Activated CD4-positive, alpha-beta memory T cell treated with anti-CD3 and anti-CD28 coated beads, Interleukin-2, amount 10 ng/mL, durations not matched to agents 7 days and 5 days (primary cell): ENCODE measurements at regions of chr10 and their contacts with region 1.

Region 1: GRCh38 chr10:96089670-96090462 is 40.2 kb upstream of the ZNF518A start:
- DNase-seq: peak; percentile 95
- H3K4me3 Mint-ChIP-seq: peak overlapping the region; percentile 88
- H3K27ac Mint-ChIP-seq: peak overlapping the region; percentile 97
- H3K4me1 Mint-ChIP-seq: peaks cover 14% of the 10 kb centered on the region
- H3K27me3 Mint-ChIP-seq: peaks cover 19% of the 10 kb centered on the region

Region 2: GRCh38 chr10:95850791-95851190 is 239.1 kb before region 1 on chr10:
- CTCF ChIA-PET with region 1: no interaction called
- POLR2A ChIA-PET with region 1: no interaction called
- DNase-seq: no peak
- H3K4me3 Mint-ChIP-seq: no peak overlapping the region
- H3K27ac Mint-ChIP-seq: no peak overlapping the region
- H3K4me1 Mint-ChIP-seq: peaks cover under 1% of the 10 kb centered on the region
- H3K27me3 Mint-ChIP-seq: peaks cover 9% of the 10 kb centered on the region

Region 3: DNA sequence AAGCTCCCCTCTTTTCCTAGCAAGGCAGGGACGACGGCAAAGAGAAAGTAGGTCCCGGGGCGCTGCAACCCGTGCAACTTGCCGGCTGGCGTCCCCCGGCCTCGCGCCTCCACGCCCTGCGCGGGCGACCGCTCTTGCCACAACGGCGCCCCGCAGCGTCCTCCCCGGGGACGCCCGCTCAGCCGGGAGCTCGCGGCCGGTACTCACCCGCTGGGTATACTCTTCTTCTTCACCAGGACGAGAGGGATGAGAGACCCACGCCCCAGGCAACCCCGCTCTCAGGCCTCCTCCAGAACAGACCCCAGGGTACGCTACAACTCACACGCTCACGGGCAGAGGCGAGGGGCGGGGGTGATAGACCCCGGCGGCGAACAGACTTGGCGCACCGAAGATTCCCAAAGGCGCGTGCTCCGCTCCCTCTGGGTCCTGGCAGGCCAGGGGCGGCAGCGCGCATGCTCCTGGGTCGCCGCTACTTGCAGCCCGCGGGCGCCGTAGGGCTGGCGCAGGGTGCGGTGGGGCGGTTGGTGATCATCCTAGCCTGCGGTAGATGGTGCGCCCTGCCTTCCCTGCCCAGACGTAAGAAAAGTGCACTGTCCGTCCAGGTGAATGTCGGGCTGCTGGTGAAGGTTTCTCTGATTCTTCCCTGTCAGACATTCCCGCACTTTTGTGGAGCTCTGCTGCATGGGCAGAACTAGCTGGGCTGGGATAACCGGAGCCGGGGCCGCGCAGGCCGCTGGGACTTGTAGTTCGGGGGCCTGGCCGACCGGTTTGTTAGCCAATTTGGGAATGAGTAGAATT is 182.2 kb before region 1 on chr10 and contains the start of gene CC2D2B:
- CTCF ChIA-PET with region 1: no interaction called
- POLR2A ChIA-PET with region 1: interaction called, 12 read pairs
- DNase-seq: peak; percentile 70
- H3K4me3 Mint-ChIP-seq: peak within 1 kb of the TSS; percentile 87
- H3K27ac Mint-ChIP-seq: peak within 1 kb of the TSS; percentile 76
- H3K4me1 Mint-ChIP-seq: peaks cover 15% of the 10 kb centered on the region
- H3K27me3 Mint-ChIP-seq: peaks cover 14% of the 10 kb centered on the region
- total RNA-seq, gene CC2D2B: 0.35 to 0.40 TPM

Region 4: GRCh38 chr10:95976362-95977229 is 113.3 kb before region 1 on chr10:
- CTCF ChIA-PET with region 1: no interaction called
- POLR2A ChIA-PET with region 1: no interaction called
- DNase-seq: no peak
- H3K4me3 Mint-ChIP-seq: no peak overlapping the region
- H3K27ac Mint-ChIP-seq: no peak overlapping the region
- H3K4me1 Mint-ChIP-seq: no peaks in the 10 kb centered on the region
- H3K27me3 Mint-ChIP-seq: no peaks in the 10 kb centered on the region

Region 5: DNA sequence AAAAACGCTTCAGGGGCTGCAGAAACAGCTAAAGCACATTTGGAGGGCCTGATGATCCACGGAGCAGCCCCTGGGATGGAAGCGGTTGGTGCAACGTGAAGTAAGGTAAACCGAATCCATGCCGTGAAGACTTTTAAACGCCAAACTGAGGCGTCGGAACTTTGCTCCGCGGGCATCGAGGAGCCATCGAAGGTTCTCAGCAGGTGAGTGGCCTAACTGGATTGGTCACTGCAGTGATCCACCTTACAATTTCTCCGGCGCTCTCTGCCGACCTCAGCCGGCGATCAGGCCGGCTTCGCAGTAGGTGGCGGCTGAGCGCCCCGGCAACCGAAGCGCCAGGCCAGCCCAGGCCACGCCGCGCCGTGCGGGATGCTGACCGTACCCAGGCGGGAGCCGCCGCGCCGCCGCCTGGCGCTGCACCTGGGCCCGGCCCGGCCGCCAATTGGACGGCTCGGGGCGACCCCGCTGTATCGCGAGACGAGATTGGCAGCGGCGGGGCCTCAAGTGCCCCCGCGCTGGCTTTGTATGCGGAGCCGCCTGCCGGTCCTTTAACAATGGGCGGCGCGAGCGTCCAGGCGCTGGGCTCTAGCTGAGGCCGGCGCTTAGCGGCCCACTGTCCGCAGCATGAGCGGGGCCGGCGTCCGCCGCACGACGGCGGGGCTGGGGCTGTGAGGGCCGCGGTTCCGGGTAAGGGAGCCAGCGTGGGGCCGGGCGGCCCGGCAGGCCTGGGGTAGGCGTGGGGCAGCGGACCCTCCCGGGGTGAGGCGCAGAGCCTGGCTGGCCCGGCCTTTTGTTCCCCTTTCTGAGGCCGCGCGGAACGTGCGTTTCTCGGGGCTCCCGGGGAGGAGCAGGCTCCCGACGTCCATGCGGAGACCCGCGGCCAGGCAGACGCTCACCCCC is 46.6 kb before region 1 on chr10 and contains the start of gene CCNJ:
- CTCF ChIA-PET with region 1: interaction called, 4 read pairs
- POLR2A ChIA-PET with region 1: interaction called, 27 read pairs
- DNase-seq: peak; percentile 85
- H3K4me3 Mint-ChIP-seq: peak within 1 kb of the TSS; percentile 88
- H3K27ac Mint-ChIP-seq: peak within 1 kb of the TSS; percentile 63
- H3K4me1 Mint-ChIP-seq: peaks cover 33% of the 10 kb centered on the region
- H3K27me3 Mint-ChIP-seq: peaks cover 4% of the 10 kb centered on the region
- total RNA-seq, gene CCNJ: 4.7 to 5.6 TPM

Region 6: DNA sequence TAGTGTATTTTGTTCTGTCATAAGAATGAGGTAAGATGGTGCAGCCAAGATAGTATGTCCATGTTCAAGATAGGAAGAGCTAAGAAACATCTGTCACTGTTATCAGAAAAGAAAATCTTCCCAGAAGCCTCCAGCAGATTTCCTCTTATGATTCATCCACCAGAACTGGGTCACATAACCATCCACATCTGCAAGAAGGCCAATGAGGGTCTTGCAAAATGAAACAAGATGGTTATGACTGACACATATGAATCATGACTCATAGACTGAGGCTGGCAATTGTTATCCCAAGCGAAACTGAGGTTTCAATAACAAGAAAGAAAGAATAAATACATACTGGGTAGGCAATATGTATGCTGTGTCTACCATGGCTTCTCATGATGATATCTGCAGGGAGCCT is 16.1 kb before region 1 on chr10:
- CTCF ChIA-PET with region 1: interaction called, 4 read pairs
- POLR2A ChIA-PET with region 1: interaction called, 22 read pairs
- DNase-seq: no peak
- H3K4me3 Mint-ChIP-seq: no peak overlapping the region
- H3K27ac Mint-ChIP-seq: peak overlapping the region; percentile 64
- H3K4me1 Mint-ChIP-seq: peaks cover 33% of the 10 kb centered on the region
- H3K27me3 Mint-ChIP-seq: no peaks in the 10 kb centered on the region

Region 7: DNA sequence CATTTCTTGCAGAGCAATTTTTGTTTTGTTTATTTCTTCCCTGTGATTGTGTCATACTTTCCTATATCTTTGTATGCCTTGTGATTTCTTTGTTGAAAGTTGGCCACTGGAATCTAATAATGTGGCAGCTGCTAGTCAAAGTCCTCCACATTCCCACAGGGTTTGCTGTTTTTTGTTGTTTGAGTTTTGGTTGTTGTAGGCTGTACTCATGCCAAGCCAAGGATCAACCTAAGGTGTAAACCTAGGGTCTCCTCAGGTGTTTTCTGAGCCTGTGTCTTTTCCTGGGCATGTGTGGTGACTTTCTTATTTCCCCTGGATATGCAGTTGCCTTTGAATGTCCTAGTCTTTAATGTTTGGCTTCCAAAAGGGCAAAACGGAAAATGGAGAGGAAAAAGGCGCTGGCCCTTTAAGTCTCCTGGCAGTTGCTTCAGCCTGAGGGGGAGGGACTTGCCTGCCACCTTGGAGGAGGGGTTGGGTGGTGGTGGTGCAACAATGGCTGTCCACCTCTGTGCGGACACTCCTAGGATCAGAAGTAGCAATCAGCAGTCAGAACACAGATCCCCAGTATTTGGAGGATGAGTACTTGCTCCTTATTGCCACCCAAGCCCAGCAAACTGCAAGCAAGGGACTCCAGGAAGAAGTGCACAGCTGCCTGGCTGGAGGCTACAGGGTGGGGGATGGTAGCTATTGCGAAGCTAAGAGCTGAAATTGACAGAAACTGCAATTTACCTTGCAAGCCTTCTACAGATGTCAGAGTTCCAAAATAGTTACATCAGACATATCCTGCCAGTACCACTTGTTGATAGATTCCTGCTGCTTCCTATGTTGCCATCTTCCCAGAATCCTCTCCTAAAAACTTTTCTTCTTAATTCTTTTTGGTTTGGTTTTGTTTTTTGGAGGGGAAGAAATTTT is 34.6 kb after region 1 on chr10:
- CTCF ChIA-PET with region 1: interaction called, 31 read pairs
- POLR2A ChIA-PET with region 1: interaction called, 229 read pairs
- DNase-seq: no peak
- H3K4me3 Mint-ChIP-seq: no peak overlapping the region
- H3K27ac Mint-ChIP-seq: no peak overlapping the region
- H3K4me1 Mint-ChIP-seq: peaks cover 10% of the 10 kb centered on the region
- H3K27me3 Mint-ChIP-seq: peaks cover 44% of the 10 kb centered on the region